Activated CD4-positive, alpha-beta T cell treated with anti-CD3 and anti-CD28 coated beads, Interleukin-2, amount 10 ng/mL, durations not matched to agents 24 days and 14 days (primary cell): ENCODE measurements at regions of chr9 and their contacts with region 1.

Region 1: DNA sequence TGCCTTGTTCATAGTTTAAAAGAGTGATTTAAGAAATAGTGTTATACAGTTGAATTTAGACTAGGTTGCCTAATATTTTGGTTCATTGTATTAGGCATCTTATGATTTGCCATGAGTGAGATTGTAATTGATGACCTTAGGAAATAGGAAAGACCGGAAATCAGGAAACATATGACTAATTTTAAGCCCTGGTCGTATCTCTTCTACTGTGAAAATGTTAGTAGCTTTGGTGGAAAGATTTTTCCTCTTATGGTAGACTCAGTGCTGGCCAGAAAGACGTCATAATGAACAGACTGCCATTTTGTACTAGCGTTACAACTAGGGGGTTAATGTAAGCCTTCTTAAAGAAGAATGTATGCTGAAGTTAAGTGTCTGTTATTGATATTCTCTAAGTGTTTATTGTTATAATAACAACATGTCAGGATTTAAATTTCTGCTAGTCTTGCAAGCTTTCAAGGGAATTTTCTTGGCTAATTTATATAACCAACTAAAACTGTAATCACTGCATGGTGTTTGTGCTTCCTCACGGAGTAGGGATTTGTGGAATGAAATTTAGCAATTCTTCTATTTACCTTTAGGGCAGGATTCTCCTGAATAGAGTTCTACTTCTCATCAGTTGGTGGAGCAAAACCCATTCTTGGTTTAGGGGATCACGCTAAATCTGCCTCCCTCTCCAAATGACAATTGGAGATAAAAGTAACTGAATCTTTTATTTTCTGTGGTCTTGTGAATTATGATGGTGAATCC is 21.9 kb downstream of the SMARCA2 start:
- DNase-seq: no peak
- H3K4me3 Mint-ChIP-seq: no peak overlapping the region
- H3K27ac Mint-ChIP-seq: no peak overlapping the region
- H3K4me1 Mint-ChIP-seq: peaks cover 36% of the 10 kb centered on the region
- H3K27me3 Mint-ChIP-seq: no peaks in the 10 kb centered on the region

Region 2: DNA sequence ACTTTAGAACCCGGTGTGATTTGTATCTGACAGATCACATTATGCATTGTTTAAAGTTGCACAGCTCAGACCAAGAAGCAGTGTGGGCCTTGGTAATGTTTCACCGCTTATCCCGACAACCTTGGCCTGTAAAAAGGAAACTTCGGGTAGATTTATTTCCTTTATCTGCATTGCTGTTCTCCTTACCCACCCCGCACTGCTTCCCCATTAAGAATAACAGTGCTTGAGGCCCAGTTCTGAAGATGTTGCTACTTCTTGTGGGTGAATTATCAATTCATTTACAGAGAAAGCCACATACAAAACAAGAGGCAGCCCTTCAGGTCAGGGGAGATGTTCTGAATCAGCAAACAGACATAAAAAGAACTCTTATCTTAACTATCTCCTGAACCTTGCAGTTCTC is 13.5 kb before region 1 on chr9:
- intact Hi-C with region 1: loop called (anchors 2 kb)
- DNase-seq: peak; percentile 67
- H3K4me3 Mint-ChIP-seq: peak overlapping the region; percentile 78
- H3K27ac Mint-ChIP-seq: peak overlapping the region; percentile 86
- H3K4me1 Mint-ChIP-seq: peaks cover 85% of the 10 kb centered on the region
- H3K27me3 Mint-ChIP-seq: no peaks in the 10 kb centered on the region